ENCODE measurements at regions of chr21 and their contacts with region 1.

Region 1: DNA sequence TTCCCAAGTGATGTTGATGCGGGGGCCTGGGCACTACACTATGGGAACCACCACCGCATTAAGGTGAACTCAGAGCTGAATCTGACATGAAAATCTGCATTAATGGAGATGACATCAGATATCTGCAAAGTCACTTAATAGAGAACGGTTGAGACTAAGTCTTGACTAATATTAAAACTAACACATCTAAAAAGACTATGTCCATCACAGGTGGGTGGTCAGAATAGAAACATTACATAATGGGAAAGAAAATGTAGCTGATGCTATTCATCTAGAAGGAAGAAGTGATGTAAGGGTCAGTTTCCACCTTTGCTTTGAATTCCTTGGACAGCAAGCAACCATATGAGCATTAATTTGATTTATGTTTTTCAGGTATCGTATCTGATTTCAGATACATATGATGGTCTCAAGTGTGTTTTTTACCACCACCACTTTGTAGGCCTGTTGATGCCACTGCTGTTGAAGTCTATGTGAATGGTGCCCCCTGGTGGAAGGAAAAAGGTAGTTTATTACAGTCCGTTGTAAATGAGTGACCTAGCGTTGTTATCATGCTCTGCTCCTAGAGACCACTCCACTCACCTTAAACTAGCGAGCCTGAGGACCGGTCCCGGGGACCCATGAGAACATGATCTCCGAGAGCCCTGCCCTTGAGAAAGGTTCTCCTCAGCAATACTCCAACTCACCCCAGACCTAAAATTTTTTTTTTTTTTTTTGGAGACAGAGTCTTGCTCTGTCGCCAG is 73.5 kb downstream of the BACH1 start:
- DNase-seq: peak in 8 of 9 donors; percentile 41 to 70 (median 61)
- ATAC-seq: peak; percentile 94
- H3K4me3 ChIP-seq: no peak overlapping the region
- H3K4me3 Mint-ChIP-seq: no peak overlapping the region
- H3K27ac ChIP-seq: no peak overlapping the region
- H3K27ac Mint-ChIP-seq: peak overlapping the region in 3 of 9 donors; percentile 9 to 60 (median 30)
- H3K4me1 ChIP-seq: peaks cover 9 to 10% of the 10 kb centered on the region in 2 donors
- H3K4me1 Mint-ChIP-seq: peaks cover 5 to 15% (median 10%) of the 10 kb centered on the region in 7 donors
- H3K27me3 ChIP-seq: no peaks in the 10 kb centered on the region
- H3K27me3 Mint-ChIP-seq: no peaks in the 10 kb centered on the region

Region 2: GRCh38 chr21:29091032-29091431 is 281.2 kb before region 1 on chr21:
- CTCF ChIA-PET with region 1: interaction called, 12 read pairs
- POLR2A ChIA-PET with region 1: interaction called, 3 read pairs
- intact Hi-C with region 1: loop called (anchors 1 kb)
- DNase-seq: no peak
- ATAC-seq: peak; percentile 9
- H3K4me3 ChIP-seq: no peak overlapping the region
- H3K4me3 Mint-ChIP-seq: no peak overlapping the region
- H3K27ac ChIP-seq: no peak overlapping the region
- H3K27ac Mint-ChIP-seq: no peak overlapping the region
- H3K4me1 ChIP-seq: no peaks in the 10 kb centered on the region
- H3K4me1 Mint-ChIP-seq: peaks cover 0 to 9% (median 0%) of the 10 kb centered on the region in 7 donors
- H3K27me3 ChIP-seq: no peaks in the 10 kb centered on the region
- H3K27me3 Mint-ChIP-seq: peaks cover 0 to 3% (median 0%) of the 10 kb centered on the region in 5 donors

Region 3: GRCh38 chr21:29232601-29233546 is 139.4 kb before region 1 on chr21:
- CTCF ChIA-PET with region 1: interaction called, 4 read pairs
- POLR2A ChIA-PET with region 1: no interaction called
- intact Hi-C with region 1: loop called in 1 of 2 experiments (anchors 1 kb)
- DNase-seq: peak in 2 of 9 donors; percentile 3 to 8
- ATAC-seq: peak; percentile 24
- H3K4me3 ChIP-seq: no peak overlapping the region
- H3K4me3 Mint-ChIP-seq: peak overlapping the region in 1 of 10 donors; percentile 40
- H3K27ac ChIP-seq: no peak overlapping the region
- H3K27ac Mint-ChIP-seq: peak overlapping the region in 1 of 9 donors; percentile 45
- H3K4me1 ChIP-seq: no peaks in the 10 kb centered on the region
- H3K4me1 Mint-ChIP-seq: peaks cover 5 to 40% (median 6%) of the 10 kb centered on the region in 7 donors
- H3K27me3 ChIP-seq: no peaks in the 10 kb centered on the region
- H3K27me3 Mint-ChIP-seq: peaks cover 0 to 14% (median 0%) of the 10 kb centered on the region in 5 donors

Region 4: GRCh38 chr21:29306920-29307319 is 65.3 kb before region 1 on chr21:
- CTCF ChIA-PET with region 1: no interaction called
- POLR2A ChIA-PET with region 1: no interaction called
- intact Hi-C with region 1: no loop called
- DNase-seq: no peak
- ATAC-seq: no peak
- H3K4me3 ChIP-seq: no peak overlapping the region
- H3K4me3 Mint-ChIP-seq: no peak overlapping the region
- H3K27ac ChIP-seq: no peak overlapping the region
- H3K27ac Mint-ChIP-seq: no peak overlapping the region
- H3K4me1 ChIP-seq: peaks cover 0 to 12% of the 10 kb centered on the region in 2 donors
- H3K4me1 Mint-ChIP-seq: peaks cover 40 to 87% (median 69%) of the 10 kb centered on the region in 7 donors
- H3K27me3 ChIP-seq: no peaks in the 10 kb centered on the region
- H3K27me3 Mint-ChIP-seq: no peaks in the 10 kb centered on the region

Region 5: DNA sequence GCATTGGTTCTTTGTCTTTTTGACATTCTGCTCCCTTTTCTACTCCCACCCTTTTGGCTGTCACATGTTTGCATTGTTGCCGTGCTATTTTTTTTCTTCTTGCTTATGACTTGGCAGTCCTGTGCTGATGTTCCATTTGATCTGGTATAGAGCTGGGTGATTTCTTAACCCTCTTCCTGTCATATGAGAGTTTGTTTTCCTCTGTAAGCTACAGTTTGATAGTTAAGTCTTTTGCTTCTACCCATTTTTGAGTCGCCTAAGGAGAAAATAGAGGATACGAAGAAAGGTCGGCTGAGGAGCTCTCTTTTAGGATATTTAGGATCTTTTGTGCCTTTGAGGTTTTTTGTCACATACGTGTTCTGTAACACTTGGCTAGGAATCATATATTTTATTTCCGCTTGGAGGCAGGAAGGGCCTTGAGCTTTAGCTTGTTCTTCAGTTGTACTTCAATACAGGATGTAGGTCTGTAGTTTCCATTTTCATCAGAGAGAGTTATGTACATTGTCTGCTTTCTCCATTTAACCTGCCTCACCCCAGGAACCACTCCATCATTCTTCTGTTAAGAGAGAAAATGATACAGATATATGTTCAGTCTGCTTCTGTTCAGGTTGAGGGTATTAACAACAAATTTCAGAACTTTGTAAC is 77.2 kb after region 1 on chr21:
- CTCF ChIA-PET with region 1: interaction called, 3 read pairs
- POLR2A ChIA-PET with region 1: interaction called, 4 read pairs
- intact Hi-C with region 1: loop called in 1 of 2 experiments (anchors 2 kb)
- DNase-seq: peak in 7 of 9 donors; percentile 50 to 90 (median 76)
- ATAC-seq: peak; percentile 93
- H3K4me3 ChIP-seq: peak overlapping the region; percentile 17
- H3K4me3 Mint-ChIP-seq: peak overlapping the region; percentile 1 to 77 (median 64)
- H3K27ac ChIP-seq: peak overlapping the region; percentile 66
- H3K27ac Mint-ChIP-seq: peak overlapping the region; percentile 84 to 98 (median 94)
- H3K4me1 ChIP-seq: peaks cover 7 to 17% of the 10 kb centered on the region in 2 donors
- H3K4me1 Mint-ChIP-seq: peaks cover 5 to 67% (median 24%) of the 10 kb centered on the region in 7 donors
- H3K27me3 ChIP-seq: no peaks in the 10 kb centered on the region
- H3K27me3 Mint-ChIP-seq: no peaks in the 10 kb centered on the region

Region 6: DNA sequence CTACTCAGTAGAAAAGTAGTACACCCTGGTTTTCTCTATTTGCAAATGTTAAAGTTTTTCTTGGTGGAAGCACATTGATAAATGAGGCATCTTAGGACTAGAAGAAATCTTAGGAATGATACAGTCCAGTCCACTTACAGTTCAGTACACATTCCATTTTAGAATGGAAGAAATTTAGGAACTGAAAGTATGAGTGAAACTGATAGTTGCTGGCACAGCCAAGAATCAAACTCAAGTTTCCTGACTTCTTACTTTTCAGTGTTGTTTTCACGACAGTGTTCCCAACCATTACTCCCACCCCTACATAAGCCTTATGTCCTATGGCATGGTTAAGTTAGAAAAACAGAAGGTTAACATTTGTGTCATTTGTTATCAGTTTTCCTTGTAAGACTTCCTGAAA is 185.0 kb after region 1 on chr21:
- CTCF ChIA-PET with region 1: no interaction called
- POLR2A ChIA-PET with region 1: no interaction called
- intact Hi-C with region 1: no loop called
- DNase-seq: no peak
- ATAC-seq: no peak
- H3K4me3 ChIP-seq: no peak overlapping the region
- H3K4me3 Mint-ChIP-seq: no peak overlapping the region
- H3K27ac ChIP-seq: no peak overlapping the region
- H3K27ac Mint-ChIP-seq: no peak overlapping the region
- H3K4me1 ChIP-seq: no peaks in the 10 kb centered on the region
- H3K4me1 Mint-ChIP-seq: no peaks in the 10 kb centered on the region
- H3K27me3 ChIP-seq: no peaks in the 10 kb centered on the region
- H3K27me3 Mint-ChIP-seq: no peaks in the 10 kb centered on the region

Measured in naive thymus-derived CD4-positive, alpha-beta T cell (primary cell).